Sigmoid colon (tissue), 7 donors: ENCODE measurements at regions of chr22 and their contacts with region 1.

Region 1: DNA sequence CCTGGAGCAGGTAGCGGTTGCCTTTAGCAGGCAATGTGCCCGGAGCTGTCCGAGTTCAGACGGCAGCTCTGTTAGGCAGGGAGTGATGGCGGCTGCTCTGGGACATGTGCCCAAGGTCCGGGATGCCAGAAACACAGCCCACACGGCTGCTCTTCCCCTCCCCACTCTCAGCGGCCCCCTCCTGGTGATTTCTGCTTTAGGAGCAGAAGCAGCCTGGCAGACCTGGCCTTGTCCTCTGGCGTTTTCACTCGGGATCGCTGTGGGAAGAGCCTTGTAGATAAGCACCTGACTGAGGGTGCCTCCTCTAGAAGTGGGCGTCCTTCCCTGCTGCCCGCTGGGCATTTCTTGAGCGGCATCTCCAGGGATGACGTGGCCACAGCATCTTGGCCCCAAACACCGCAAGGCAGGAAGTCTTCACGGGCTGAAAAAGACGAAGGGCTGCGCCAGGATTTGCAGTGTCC is 392.2 kb downstream of the TBC1D22A start:
- DNase-seq: peak; percentile 77
- H3K4me3 ChIP-seq: peak overlapping the region in 3 of 4 donors; percentile 23 to 43 (median 38)
- H3K27ac ChIP-seq: peak overlapping the region in 3 of 4 donors; percentile 11 to 33 (median 24)
- H3K4me1 ChIP-seq: peaks cover 0 to 15% (median 12%) of the 10 kb centered on the region in 4 donors
- H3K27me3 ChIP-seq: no peaks in the 10 kb centered on the region
- CTCF ChIP-seq: no peak
- EP300 ChIP-seq: no peak
- POLR2A ChIP-seq: no peak

Region 2: GRCh38 chr22:46829941-46830715 is 324.5 kb before region 1 on chr22:
- intact Hi-C with region 1: loop called (anchors 10 kb)
- DNase-seq: peak; percentile 82
- H3K4me3 ChIP-seq: peak overlapping the region in 1 of 4 donors; percentile 10
- H3K27ac ChIP-seq: peak overlapping the region in 3 of 4 donors; percentile 46 to 83 (median 80)
- H3K4me1 ChIP-seq: peaks cover 0 to 38% (median 34%) of the 10 kb centered on the region in 4 donors
- H3K27me3 ChIP-seq: no peaks in the 10 kb centered on the region
- CTCF ChIP-seq: no peak
- EP300 ChIP-seq: no peak
- POLR2A ChIP-seq: no peak